Naive thymus-derived CD4-positive, alpha-beta T cell (primary cell): ENCODE measurements at regions of chr6 and their contacts with region 1.

Region 1: DNA sequence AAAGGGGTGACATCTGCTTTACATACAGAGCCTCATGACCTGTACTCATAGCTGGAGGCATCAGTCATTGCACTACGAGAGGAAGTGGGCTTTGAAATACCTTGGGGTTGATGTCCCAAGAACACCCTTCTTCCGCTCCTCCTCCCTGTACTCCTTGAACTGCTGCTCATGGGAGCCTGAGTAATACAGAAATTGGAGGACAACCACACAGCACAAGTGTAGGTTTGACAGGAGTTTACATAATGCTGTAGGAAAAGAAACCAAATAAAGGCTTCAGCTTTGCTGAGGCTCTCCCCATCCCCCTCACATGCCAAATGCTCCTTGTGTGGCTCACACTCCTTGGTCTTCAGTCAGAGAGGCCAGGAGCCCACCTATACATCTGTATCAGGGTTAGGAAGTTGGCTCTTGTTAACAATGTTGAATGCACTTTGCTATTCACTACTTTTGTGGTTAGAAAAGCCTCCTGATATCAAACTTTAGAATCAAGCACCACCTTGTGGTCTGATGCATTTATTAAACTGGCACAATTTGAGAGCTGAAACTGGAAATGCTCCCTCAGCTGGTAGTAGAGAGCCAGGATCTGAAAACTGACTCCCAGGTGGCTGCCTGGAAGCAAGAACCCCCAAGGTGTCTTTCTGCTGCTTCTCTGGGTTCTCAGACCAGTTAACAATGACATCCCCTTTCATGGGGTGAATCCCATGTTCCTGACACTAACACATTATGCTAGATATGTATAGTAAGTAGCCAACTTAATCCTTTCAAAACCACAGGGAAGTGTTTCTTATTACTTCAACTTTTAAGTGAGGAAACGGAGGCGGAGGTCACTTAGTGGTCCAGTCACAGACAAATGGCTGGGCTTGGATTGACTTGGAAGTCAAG is 56.2 kb upstream of the EDN1 start:
- DNase-seq: peak; percentile 8 to 79 (median 66)
- ATAC-seq: peak; percentile 83
- H3K4me3 ChIP-seq: no peak overlapping the region
- H3K4me3 Mint-ChIP-seq: peak overlapping the region in 4 of 10 donors; percentile 6 to 55 (median 10)
- H3K27ac ChIP-seq: no peak overlapping the region
- H3K27ac Mint-ChIP-seq: peak overlapping the region in 4 of 9 donors; percentile 18 to 55 (median 38)
- H3K4me1 ChIP-seq: peaks cover 13 to 16% of the 10 kb centered on the region in 2 donors
- H3K4me1 Mint-ChIP-seq: peaks cover 12 to 37% (median 22%) of the 10 kb centered on the region in 7 donors
- H3K27me3 ChIP-seq: no peaks in the 10 kb centered on the region
- H3K27me3 Mint-ChIP-seq: peaks cover 0 to under 1% (median 0%) of the 10 kb centered on the region in 5 donors

Region 2: GRCh38 chr6:11585426-11586016 is 648.4 kb before region 1 on chr6:
- CTCF ChIA-PET with region 1: no interaction called
- POLR2A ChIA-PET with region 1: no interaction called
- intact Hi-C with region 1: loop called in 1 of 2 experiments (anchors 1 kb)
- DNase-seq: peak in 4 of 9 donors; percentile 9 to 23 (median 10)
- ATAC-seq: no peak
- H3K4me3 ChIP-seq: no peak overlapping the region
- H3K4me3 Mint-ChIP-seq: no peak overlapping the region
- H3K27ac ChIP-seq: no peak overlapping the region
- H3K27ac Mint-ChIP-seq: no peak overlapping the region
- H3K4me1 ChIP-seq: no peaks in the 10 kb centered on the region
- H3K4me1 Mint-ChIP-seq: no peaks in the 10 kb centered on the region
- H3K27me3 ChIP-seq: no peaks in the 10 kb centered on the region
- H3K27me3 Mint-ChIP-seq: peaks cover 0 to 19% (median 0%) of the 10 kb centered on the region in 5 donors

Region 3: GRCh38 chr6:11722805-11723631 is 510.9 kb before region 1 on chr6:
- CTCF ChIA-PET with region 1: interaction called, 4 read pairs
- POLR2A ChIA-PET with region 1: no interaction called
- intact Hi-C with region 1: loop called in 1 of 2 experiments (anchors 1 kb)
- DNase-seq: peak in 5 of 9 donors; percentile 6 to 43 (median 20)
- ATAC-seq: peak; percentile 31
- H3K4me3 ChIP-seq: peak overlapping the region; percentile 12
- H3K4me3 Mint-ChIP-seq: peak overlapping the region; percentile 59 to 93 (median 78)
- H3K27ac ChIP-seq: peak overlapping the region; percentile 60
- H3K27ac Mint-ChIP-seq: peak overlapping the region; percentile 61 to 96 (median 88)
- H3K4me1 ChIP-seq: peaks cover 0 to 63% of the 10 kb centered on the region in 2 donors
- H3K4me1 Mint-ChIP-seq: peaks cover 45 to 86% (median 77%) of the 10 kb centered on the region in 7 donors
- H3K27me3 ChIP-seq: no peaks in the 10 kb centered on the region
- H3K27me3 Mint-ChIP-seq: no peaks in the 10 kb centered on the region

Region 4: DNA sequence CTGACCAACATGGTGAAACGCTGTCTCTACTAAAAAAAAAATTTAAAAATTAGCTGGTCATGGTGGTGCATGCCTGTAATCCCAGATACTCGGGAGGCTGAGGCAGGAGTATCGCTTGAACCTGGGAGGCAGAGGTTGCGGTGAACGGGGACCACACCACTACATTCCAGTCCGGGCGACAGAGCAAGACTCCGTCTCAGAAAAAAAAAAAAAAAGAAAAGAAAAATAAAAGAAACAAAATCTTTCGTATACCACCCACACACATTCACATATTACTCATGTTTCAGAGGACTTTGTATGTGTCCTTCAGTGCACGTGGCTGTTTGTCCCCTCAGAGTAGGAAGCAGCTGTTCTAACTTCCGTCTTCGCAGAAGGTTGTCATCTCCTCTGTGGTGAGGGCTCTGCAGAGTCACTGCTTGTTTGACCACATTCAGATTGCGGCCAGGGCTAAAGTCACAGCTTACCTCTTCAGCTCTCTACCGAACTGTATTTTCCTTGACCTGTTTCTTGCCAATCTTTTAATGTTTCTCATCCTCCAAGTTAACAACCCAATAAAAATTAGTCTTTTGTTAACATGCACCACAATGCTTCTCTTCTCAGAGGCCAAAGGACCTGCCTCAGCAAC is 258.5 kb before region 1 on chr6:
- CTCF ChIA-PET with region 1: interaction called, 5 read pairs
- POLR2A ChIA-PET with region 1: no interaction called
- intact Hi-C with region 1: loop called in 1 of 2 experiments (anchors 10 kb)
- DNase-seq: peak in 1 of 9 donors; percentile 7
- ATAC-seq: peak; percentile 97
- H3K4me3 ChIP-seq: no peak overlapping the region
- H3K4me3 Mint-ChIP-seq: peak overlapping the region in 7 of 10 donors; percentile 8 to 73 (median 53)
- H3K27ac ChIP-seq: no peak overlapping the region
- H3K27ac Mint-ChIP-seq: peak overlapping the region in 7 of 9 donors; percentile 1 to 53 (median 23)
- H3K4me1 ChIP-seq: no peaks in the 10 kb centered on the region
- H3K4me1 Mint-ChIP-seq: peaks cover 7 to 40% (median 21%) of the 10 kb centered on the region in 7 donors
- H3K27me3 ChIP-seq: no peaks in the 10 kb centered on the region
- H3K27me3 Mint-ChIP-seq: peaks cover 0 to 2% (median 0%) of the 10 kb centered on the region in 5 donors

Region 5: GRCh38 chr6:12075067-12075563 is 158.8 kb before region 1 on chr6:
- CTCF ChIA-PET with region 1: no interaction called
- POLR2A ChIA-PET with region 1: no interaction called
- intact Hi-C with region 1: loop called in 1 of 2 experiments (anchors 5 kb)
- DNase-seq: peak in 6 of 9 donors; percentile 19 to 58 (median 38)
- ATAC-seq: peak; percentile 61
- H3K4me3 ChIP-seq: no peak overlapping the region
- H3K4me3 Mint-ChIP-seq: peak overlapping the region in 8 of 10 donors; percentile 5 to 69 (median 38)
- H3K27ac ChIP-seq: no peak overlapping the region
- H3K27ac Mint-ChIP-seq: peak overlapping the region in 5 of 9 donors; percentile 41 to 60 (median 54)
- H3K4me1 ChIP-seq: peaks cover 0 to 18% of the 10 kb centered on the region in 2 donors
- H3K4me1 Mint-ChIP-seq: peaks cover 31 to 83% (median 68%) of the 10 kb centered on the region in 7 donors
- H3K27me3 ChIP-seq: no peaks in the 10 kb centered on the region
- H3K27me3 Mint-ChIP-seq: no peaks in the 10 kb centered on the region

Region 6: DNA sequence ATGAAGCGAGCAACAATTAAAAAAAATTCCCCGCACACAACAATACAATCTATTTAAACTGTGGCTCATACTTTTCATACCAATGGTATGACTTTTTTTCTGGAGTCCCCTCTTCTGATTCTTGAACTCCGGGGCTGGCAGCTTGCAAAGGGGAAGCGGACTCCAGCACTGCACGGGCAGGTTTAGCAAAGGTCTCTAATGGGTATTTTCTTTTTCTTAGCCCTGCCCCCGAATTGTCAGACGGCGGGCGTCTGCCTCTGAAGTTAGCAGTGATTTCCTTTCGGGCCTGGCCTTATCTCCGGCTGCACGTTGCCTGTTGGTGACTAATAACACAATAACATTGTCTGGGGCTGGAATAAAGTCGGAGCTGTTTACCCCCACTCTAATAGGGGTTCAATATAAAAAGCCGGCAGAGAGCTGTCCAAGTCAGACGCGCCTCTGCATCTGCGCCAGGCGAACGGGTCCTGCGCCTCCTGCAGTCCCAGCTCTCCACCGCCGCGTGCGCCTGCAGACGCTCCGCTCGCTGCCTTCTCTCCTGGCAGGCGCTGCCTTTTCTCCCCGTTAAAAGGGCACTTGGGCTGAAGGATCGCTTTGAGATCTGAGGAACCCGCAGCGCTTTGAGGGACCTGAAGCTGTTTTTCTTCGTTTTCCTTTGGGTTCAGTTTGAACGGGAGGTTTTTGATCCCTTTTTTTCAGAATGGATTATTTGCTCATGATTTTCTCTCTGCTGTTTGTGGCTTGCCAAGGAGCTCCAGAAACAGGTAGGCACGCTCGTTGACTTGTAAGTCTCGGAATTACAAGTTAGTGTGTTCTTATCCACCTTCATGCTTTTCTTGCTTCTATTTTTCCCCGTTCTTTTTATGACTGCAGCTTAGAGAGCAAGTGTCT is 56.2 kb after region 1 on chr6 and contains the start of gene EDN1:
- CTCF ChIA-PET with region 1: interaction called, 3 read pairs
- POLR2A ChIA-PET with region 1: no interaction called
- intact Hi-C with region 1: loop called (anchors 1 to 2 kb)
- DNase-seq: peak in 8 of 9 donors; percentile 16 to 61 (median 40)
- ATAC-seq: peak; percentile 87
- H3K4me3 ChIP-seq: peak within 1 kb of the TSS; percentile 46
- H3K4me3 Mint-ChIP-seq: peak within 1 kb of the TSS; percentile 82 to 96 (median 88)
- H3K27ac ChIP-seq: no peak within 1 kb of the TSS
- H3K27ac Mint-ChIP-seq: peak within 1 kb of the TSS in 1 of 9 donors; percentile 57
- H3K4me1 ChIP-seq: no peaks in the 10 kb centered on the region
- H3K4me1 Mint-ChIP-seq: peaks cover 7 to 22% (median 16%) of the 10 kb centered on the region in 7 donors
- H3K27me3 ChIP-seq: peaks cover 0 to 3% of the 10 kb centered on the region in 2 donors
- H3K27me3 Mint-ChIP-seq: peaks cover 31 to 51% (median 38%) of the 10 kb centered on the region in 5 donors
- total RNA-seq, gene EDN1: 0.17 to 1.7 (median 1.4) TPM